ENCODE measurements at regions of chr7 and their contacts with region 1.

Region 1: DNA sequence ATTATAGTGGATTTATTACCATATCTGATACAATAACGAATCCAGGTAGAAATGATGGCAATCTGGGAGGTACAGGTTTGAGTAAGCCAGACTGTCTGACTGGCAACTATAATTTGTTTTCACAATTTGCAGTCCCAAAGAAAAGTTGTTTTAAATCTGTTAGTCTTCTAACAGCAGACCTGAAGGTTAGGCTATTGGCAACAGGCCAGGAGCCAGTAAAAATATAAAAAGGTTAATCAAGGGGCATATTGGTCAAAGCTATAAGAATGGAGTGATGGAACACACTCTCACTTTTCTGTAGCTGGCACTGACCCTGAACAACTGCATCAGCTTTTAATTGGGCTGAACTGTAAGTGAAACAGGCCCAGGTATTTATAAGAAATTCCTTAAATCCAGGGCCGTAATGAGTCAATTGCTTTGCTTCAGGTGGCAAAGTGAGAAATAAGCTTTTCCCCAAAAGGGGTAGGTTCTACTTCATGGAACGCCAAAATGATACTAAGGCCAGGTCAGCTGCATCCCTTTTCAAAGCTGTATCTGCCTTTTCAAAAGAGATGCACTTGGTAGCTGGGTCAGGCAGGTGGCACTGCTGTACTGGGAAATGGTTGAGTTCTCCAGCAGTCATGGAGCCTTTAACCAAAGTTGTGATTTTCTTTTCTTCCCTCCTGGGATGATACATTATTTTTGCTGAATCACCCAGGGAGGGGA is 7.0 kb upstream of the GPR22 start:
- DNase-seq: peak; percentile 40
- H3K4me3 ChIP-seq: no peak overlapping the region
- H3K27ac ChIP-seq: peak overlapping the region; percentile 75
- H3K4me1 ChIP-seq: peaks cover 31% of the 10 kb centered on the region
- H3K27me3 ChIP-seq: no peaks in the 10 kb centered on the region
- CTCF ChIP-seq: peak; percentile 81

Region 2: GRCh38 chr7:107201795-107202450 is 261.0 kb before region 1 on chr7:
- intact Hi-C with region 1: loop called (anchors 10 kb)
- DNase-seq: peak; percentile 60
- H3K4me3 ChIP-seq: no peak overlapping the region
- H3K27ac ChIP-seq: peak overlapping the region; percentile 67
- H3K4me1 ChIP-seq: peaks cover 25% of the 10 kb centered on the region
- H3K27me3 ChIP-seq: no peaks in the 10 kb centered on the region
- CTCF ChIP-seq: peak; percentile 71

Region 3: DNA sequence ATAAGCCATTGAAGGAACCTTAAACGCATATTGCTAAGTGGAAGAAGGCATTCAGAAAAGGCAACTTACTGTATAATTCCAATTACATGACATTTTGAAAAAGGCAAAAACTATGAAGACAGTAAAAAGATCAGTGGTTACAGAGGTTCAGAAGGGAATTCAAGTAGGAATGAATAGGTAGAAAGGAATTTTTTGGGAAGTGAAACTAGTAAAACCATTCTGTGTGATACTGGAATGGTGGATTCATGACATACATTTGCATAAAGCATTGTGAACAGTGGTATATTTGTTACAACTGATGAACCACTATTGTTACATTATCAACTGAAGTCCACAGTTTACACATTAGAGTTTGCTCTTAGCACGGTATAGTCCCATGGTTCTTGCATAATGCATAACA is 107.3 kb before region 1 on chr7:
- intact Hi-C with region 1: no loop called
- DNase-seq: no peak
- H3K4me3 ChIP-seq: no peak overlapping the region
- H3K27ac ChIP-seq: no peak overlapping the region
- H3K4me1 ChIP-seq: no peaks in the 10 kb centered on the region
- H3K27me3 ChIP-seq: no peaks in the 10 kb centered on the region
- CTCF ChIP-seq: no peak

Region 4: GRCh38 chr7:107725151-107725740 is 262.4 kb after region 1 on chr7:
- intact Hi-C with region 1: loop called (anchors 5 kb)
- DNase-seq: no peak
- H3K4me3 ChIP-seq: no peak overlapping the region
- H3K27ac ChIP-seq: no peak overlapping the region
- H3K4me1 ChIP-seq: no peaks in the 10 kb centered on the region
- H3K27me3 ChIP-seq: peaks cover 4% of the 10 kb centered on the region
- CTCF ChIP-seq: peak; percentile 78

Region 5: DNA sequence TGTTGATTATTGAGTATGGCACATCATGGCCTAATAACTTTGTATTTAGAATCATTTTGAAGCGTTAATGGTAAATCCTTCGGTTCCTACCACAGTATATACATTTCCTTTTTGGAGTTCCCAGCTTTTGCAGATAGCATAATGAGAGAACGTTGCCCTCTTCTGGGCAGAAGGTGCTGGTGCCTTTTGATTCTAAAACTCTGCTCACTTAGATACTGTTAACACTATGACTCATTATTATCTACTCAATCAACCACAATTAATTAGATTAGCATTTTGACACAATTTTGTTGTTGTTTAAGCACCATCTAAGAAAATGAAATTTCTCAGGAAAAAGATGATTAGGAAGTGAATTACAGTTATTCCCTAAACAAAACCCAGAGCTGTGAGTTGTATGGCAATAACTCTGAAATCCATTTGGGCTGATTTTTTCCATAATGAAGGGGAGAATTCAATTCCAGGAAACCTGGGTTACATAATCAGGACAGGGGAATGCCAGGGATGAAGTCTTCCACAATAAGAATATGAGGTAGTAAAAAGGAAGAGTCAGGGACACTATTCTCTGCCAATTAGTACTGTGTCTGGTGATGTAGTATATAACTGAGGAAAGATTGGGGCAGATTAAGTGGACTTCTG is 416.6 kb after region 1 on chr7:
- intact Hi-C with region 1: loop called (anchors 10 kb)
- DNase-seq: no peak
- H3K4me3 ChIP-seq: no peak overlapping the region
- H3K27ac ChIP-seq: no peak overlapping the region
- H3K4me1 ChIP-seq: peaks cover 9% of the 10 kb centered on the region
- H3K27me3 ChIP-seq: no peaks in the 10 kb centered on the region
- CTCF ChIP-seq: peak; percentile 79

Measured in left ventricle myocardium inferior (tissue), 1 donor.